CD4-positive, alpha-beta memory T cell (primary cell): ENCODE measurements at regions of chr13 and their contacts with region 1.

Region 1: GRCh38 chr13:77230560-77230959 is 96.3 kb downstream of the MYCBP2 start:
- DNase-seq: peak in 1 of 5 donors; percentile 31
- H3K4me3 ChIP-seq: no peak overlapping the region
- H3K4me3 Mint-ChIP-seq: peak overlapping the region in 1 of 8 donors; percentile 51
- H3K27ac ChIP-seq: no peak overlapping the region
- H3K27ac Mint-ChIP-seq: peak overlapping the region in 5 of 7 donors; percentile 13 to 79 (median 42)
- H3K4me1 ChIP-seq: peaks cover 11% of the 10 kb centered on the region
- H3K4me1 Mint-ChIP-seq: peaks cover 8 to 17% (median 15%) of the 10 kb centered on the region in 4 donors
- H3K27me3 ChIP-seq: no peaks in the 10 kb centered on the region
- H3K27me3 Mint-ChIP-seq: no peaks in the 10 kb centered on the region

Region 2: GRCh38 chr13:77250975-77251374 is 20.4 kb after region 1 on chr13:
- CTCF ChIA-PET with region 1: no interaction called
- POLR2A ChIA-PET with region 1: no interaction called
- intact Hi-C with region 1: no loop called
- DNase-seq: no peak
- H3K4me3 ChIP-seq: no peak overlapping the region
- H3K4me3 Mint-ChIP-seq: no peak overlapping the region
- H3K27ac ChIP-seq: no peak overlapping the region
- H3K27ac Mint-ChIP-seq: peak overlapping the region in 1 of 7 donors; percentile 4
- H3K4me1 ChIP-seq: no peaks in the 10 kb centered on the region
- H3K4me1 Mint-ChIP-seq: peaks cover 18 to 22% (median 20%) of the 10 kb centered on the region in 4 donors
- H3K27me3 ChIP-seq: no peaks in the 10 kb centered on the region
- H3K27me3 Mint-ChIP-seq: no peaks in the 10 kb centered on the region

Region 3: GRCh38 chr13:77267362-77267761 is 36.8 kb after region 1 on chr13:
- CTCF ChIA-PET with region 1: no interaction called
- POLR2A ChIA-PET with region 1: no interaction called
- intact Hi-C with region 1: loop called (anchors 5 kb)
- DNase-seq: no peak
- H3K4me3 ChIP-seq: no peak overlapping the region
- H3K4me3 Mint-ChIP-seq: no peak overlapping the region
- H3K27ac ChIP-seq: no peak overlapping the region
- H3K27ac Mint-ChIP-seq: no peak overlapping the region
- H3K4me1 ChIP-seq: no peaks in the 10 kb centered on the region
- H3K4me1 Mint-ChIP-seq: peaks cover 0 to 14% (median 5%) of the 10 kb centered on the region in 4 donors
- H3K27me3 ChIP-seq: no peaks in the 10 kb centered on the region
- H3K27me3 Mint-ChIP-seq: no peaks in the 10 kb centered on the region

Region 4: DNA sequence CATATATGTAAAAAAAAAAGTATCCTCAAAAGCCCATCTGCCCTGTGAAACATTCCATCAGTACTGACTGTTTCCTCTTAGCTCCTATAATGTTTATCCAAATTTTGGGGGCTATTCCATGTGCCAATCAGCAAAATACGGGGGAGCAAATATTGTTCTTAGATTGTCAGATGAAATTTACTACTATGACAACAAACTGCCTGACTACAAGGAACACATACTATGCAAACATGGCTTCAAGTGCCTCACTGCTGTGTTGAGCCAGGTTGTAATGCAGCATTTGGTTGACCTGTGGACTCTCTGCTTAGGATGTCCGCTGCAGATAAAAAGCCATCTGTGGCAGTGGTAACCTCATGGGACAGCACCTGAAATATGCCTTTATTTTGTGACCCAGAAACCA is 206.7 kb after region 1 on chr13:
- CTCF ChIA-PET with region 1: no interaction called
- POLR2A ChIA-PET with region 1: no interaction called
- intact Hi-C with region 1: no loop called
- DNase-seq: no peak
- H3K4me3 ChIP-seq: no peak overlapping the region
- H3K4me3 Mint-ChIP-seq: no peak overlapping the region
- H3K27ac ChIP-seq: no peak overlapping the region
- H3K27ac Mint-ChIP-seq: no peak overlapping the region
- H3K4me1 ChIP-seq: no peaks in the 10 kb centered on the region
- H3K4me1 Mint-ChIP-seq: no peaks in the 10 kb centered on the region
- H3K27me3 ChIP-seq: no peaks in the 10 kb centered on the region
- H3K27me3 Mint-ChIP-seq: peaks cover 0 to 3% of the 10 kb centered on the region in 2 donors